ENCODE measurements at regions of chr2 and their contacts with region 1.

Region 1: DNA sequence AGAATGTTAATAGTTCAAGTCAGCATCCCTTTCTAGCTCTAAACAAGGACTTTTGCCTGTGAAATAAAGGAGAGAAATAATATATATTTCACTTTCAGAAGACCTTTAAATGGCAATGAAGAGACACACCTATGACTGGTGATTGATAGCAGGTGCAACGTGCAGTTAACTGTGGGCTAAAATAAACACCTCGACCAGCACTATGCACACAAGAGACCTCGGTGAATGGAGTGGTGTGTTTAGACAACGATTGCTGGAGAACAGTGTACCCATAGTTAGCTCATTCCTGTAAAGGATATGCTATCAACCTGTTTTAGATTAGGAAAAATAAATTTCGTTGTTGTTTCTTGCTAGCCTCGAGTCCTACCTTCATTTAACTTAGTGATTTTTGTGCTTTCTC is 143.4 kb downstream of the NR4A2 start:
- DNase-seq: no peak
- CTCF ChIP-seq: no peak

Region 2: DNA sequence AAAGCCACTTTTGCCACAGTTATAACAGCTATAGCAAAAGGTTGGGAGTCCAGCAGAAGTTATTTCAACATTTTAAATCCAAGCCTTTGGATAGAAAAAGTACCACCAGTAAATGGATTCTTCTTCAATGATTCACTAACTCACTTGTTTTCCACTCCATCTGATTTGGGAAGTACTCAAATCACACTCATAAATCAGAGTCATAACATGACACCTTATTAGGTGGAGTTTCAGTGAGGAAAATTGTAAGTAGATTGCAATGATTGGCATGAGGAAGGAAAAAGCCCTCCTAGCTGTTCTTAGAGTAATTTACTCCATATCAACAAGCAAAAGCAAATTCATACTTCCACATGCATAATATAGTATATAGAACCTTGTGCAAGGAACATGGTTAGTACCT is 10.4 kb after region 1 on chr2:
- CTCF ChIA-PET with region 1: interaction called, 13 read pairs
- POLR2A ChIA-PET with region 1: no interaction called
- DNase-seq: no peak
- CTCF ChIP-seq: no peak

Region 3: DNA sequence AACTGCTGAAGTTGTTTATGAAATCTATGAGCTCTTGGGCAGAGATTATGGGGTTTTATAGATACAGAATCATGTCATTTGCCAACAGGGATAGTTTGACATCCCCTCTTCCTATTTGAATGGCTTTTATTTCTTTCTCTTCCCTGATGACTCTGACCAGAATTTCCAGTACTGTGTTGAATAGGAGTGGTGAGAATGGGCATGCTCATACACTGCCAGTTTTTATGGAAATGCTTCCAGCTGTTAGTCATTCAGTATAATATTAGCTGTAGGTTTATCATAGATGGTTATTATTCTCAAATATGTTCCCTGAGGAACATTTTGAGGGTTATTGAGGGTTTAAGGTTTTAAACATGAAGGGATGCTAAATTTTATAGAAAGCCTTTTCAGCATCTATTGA is 22.2 kb after region 1 on chr2:
- CTCF ChIA-PET with region 1: no interaction called
- POLR2A ChIA-PET with region 1: no interaction called
- DNase-seq: no peak
- CTCF ChIP-seq: no peak

Measured in GM10248 (cell line).